ENCODE measurements at regions of chr22 and their contacts with region 1.

Region 1: DNA sequence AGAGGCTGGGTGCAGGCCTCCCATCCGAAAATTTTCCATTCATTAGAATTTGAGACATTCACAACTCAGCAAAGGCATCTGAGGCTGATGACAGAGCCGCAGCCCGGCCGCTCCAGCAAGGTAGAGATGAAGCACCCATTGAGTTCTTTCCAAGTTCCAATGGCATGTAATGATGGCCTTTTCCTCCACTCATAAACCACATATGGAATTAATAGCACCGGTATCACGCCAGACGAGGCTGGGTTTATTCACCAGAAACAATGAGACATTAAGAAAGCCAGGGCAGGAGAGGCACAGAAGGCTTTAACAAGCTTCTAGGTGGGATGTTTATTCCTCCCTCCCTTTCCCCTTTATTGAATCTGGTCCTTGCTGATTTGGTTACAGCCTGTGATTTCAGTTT is 534.4 kb downstream of the MN1 start:
- DNase-seq: peak; percentile 59
- H3K4me3 ChIP-seq: no peak overlapping the region
- H3K27ac ChIP-seq: peak overlapping the region in 1 of 2 experiments; percentile 79; a peak in 1 of 4 replicates
- H3K4me1 ChIP-seq: peaks cover 0 to 13% of the 10 kb centered on the region in 2 experiments; a peak in 2 of 4 replicates
- H3K27me3 ChIP-seq: 0 out of 2 replicates have a peak, but pooled peaks cover 7% of the 10 kb centered on the region
- CTCF ChIP-seq: no peak
- EP300 ChIP-seq: no peak; a peak in 1 of 4 replicates
- RAD21 ChIP-seq: peak; percentile 18; the same call in 1 of the 2 replicates

Region 2: GRCh38 chr22:27245056-27245455 is 22.1 kb before region 1 on chr22:
- CTCF ChIA-PET with region 1: no interaction called
- POLR2A ChIA-PET with region 1: no interaction called
- DNase-seq: no peak
- H3K4me3 ChIP-seq: no peak overlapping the region
- H3K27ac ChIP-seq: no peak overlapping the region
- H3K4me1 ChIP-seq: peaks cover 0 to 28% of the 10 kb centered on the region in 2 experiments; a peak in 2 of 4 replicates
- H3K27me3 ChIP-seq: no peaks in the 10 kb centered on the region
- CTCF ChIP-seq: no peak
- EP300 ChIP-seq: no peak
- RAD21 ChIP-seq: no peak

Region 3: GRCh38 chr22:27283714-27284113 is 16.6 kb after region 1 on chr22:
- CTCF ChIA-PET with region 1: interaction called, 12 read pairs
- POLR2A ChIA-PET with region 1: no interaction called
- DNase-seq: no peak
- H3K4me3 ChIP-seq: no peak overlapping the region
- H3K27ac ChIP-seq: no peak overlapping the region
- H3K4me1 ChIP-seq: peaks cover 0 to 10% of the 10 kb centered on the region in 2 experiments; a peak in 2 of 4 replicates
- H3K27me3 ChIP-seq: no peaks in the 10 kb centered on the region
- CTCF ChIP-seq: no peak
- EP300 ChIP-seq: no peak
- RAD21 ChIP-seq: no peak

Region 4: DNA sequence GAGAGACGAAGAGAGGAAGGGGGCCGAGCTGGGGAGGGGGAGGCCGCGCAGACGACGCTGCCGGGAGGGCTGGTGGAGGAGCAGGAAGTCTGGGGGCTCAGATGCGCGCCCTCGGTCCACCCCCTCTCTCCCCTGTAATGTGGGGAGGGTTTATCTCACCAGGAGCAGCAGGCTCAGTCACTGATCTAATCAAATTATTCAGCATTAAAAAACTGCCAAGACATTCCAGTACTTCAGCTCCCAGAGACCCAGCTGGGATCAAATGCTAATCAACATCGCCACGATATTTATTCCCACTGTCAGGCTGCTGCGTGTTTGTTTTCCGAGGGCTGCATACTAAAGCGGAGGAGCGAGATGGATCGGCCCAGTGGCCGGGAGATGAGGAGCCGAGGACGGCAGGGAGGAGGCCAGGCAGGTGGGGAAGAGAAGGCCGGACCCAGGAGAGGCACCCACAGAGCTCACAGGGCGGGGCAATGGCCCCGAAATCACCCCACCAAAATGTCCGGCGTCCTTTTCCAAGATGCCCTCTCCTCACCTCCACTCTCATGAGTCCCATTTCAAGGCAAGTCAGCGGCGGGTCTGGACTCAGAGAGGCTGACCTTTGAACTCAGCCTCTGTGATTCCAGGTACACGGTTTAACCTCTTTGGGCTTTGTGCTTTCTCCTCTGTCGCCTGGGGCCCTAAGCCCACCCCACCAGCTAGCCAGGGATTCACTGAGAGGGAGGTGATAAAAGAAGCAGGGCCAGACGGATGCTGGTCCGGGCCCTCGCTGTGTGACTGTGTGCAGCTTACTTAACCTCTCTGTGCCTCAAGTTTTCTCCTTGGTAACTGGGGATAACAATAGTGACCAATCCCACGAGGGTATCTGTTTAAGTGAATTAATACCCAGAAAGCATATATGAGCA is 32.3 kb after region 1 on chr22:
- CTCF ChIA-PET with region 1: no interaction called
- POLR2A ChIA-PET with region 1: no interaction called
- DNase-seq: peak; percentile 59
- H3K4me3 ChIP-seq: no peak overlapping the region
- H3K27ac ChIP-seq: peak overlapping the region in 1 of 2 experiments; percentile 2; a peak in 1 of 4 replicates
- H3K4me1 ChIP-seq: peaks cover 14 to 20% of the 10 kb centered on the region in 2 experiments; a peak in 2 of 4 replicates
- H3K27me3 ChIP-seq: no peaks in the 10 kb centered on the region; the same call in 1 of the 2 replicates
- CTCF ChIP-seq: no peak
- EP300 ChIP-seq: no peak
- RAD21 ChIP-seq: no peak

Measured in SK-N-SH (cell line).